ENCODE measurements at regions of chr10 and their contacts with region 1.

Region 1: DNA sequence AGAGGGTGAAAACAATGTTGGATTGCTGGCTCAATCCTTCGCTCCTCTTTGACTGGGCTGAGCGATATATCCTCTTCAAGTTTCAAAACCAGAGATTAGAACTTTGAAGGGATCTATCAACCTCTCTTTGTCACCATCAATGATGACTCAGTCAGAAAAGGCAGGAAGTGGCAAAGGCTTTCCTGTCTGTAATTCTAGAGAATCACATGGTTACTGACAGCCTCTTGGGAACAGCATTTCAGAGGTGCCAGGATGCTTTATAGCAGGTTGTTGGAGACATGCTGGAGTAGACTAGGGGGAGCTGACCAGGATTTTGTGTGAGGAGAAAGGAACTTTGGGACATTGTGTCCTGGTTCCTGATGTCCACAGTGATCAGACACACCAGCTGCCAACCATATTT is 81.3 kb downstream of the PRKCQ start:
- DNase-seq: peak in 7 of 9 experiments; percentile 42 to 89 (median 52)
- ATAC-seq: peak; percentile 72
- H3K4me3 ChIP-seq: no peak overlapping the region
- H3K4me3 Mint-ChIP-seq: peak overlapping the region; percentile 55
- H3K27ac ChIP-seq: peak overlapping the region; percentile 0 to 87
- H3K27ac Mint-ChIP-seq: peak overlapping the region; percentile 94
- H3K4me1 ChIP-seq: peaks cover 36% of the 10 kb centered on the region
- H3K4me1 Mint-ChIP-seq: peaks cover 31% of the 10 kb centered on the region
- H3K27me3 ChIP-seq: no peaks in the 10 kb centered on the region
- H3K27me3 Mint-ChIP-seq: no peaks in the 10 kb centered on the region
- CTCF ChIP-seq: no peak

Region 2: DNA sequence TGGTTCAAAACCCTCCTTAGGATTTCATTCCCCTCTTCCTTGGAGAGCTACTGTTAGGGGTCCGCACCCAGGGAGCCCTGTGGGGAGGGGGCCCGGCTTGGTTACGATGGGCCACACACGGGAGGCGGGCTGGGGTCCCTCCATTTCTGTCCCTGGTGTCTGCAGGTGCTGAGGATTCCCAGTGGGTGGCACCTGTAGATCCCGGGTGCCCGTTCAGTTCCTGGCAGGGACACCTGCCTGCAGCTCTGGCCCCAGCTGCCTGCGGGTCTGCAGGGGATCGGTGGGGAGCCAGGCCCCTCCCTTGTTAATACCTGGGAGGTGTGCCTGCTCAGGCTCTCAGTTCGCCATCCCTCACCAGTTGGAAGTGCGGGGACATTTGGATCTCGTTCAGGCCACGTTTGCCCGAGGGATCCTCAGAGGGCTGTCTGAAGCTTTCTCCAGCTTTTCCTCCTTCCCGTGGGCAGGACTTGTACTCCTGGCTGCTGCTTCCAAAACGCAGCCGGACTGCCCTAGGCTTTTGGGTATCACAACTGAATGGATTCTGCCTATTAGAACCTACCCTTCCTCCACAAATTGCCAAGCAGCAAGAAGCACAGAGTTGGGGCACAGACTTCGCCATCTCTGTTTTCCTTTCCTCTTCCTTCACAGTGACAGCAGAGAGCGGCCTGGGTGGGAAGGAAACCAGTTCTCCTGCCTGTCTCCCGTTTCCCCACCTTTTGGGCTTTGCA is 499.2 kb before region 1 on chr10:
- CTCF ChIA-PET with region 1: no interaction called
- POLR2A ChIA-PET with region 1: no interaction called
- intact Hi-C with region 1: no loop called
- DNase-seq: peak in 1 of 9 experiments; percentile 11
- ATAC-seq: no peak
- H3K4me3 ChIP-seq: no peak overlapping the region
- H3K4me3 Mint-ChIP-seq: no peak overlapping the region
- H3K27ac ChIP-seq: no peak overlapping the region
- H3K27ac Mint-ChIP-seq: no peak overlapping the region
- H3K4me1 ChIP-seq: no peaks in the 10 kb centered on the region
- H3K4me1 Mint-ChIP-seq: peaks cover 8% of the 10 kb centered on the region
- H3K27me3 ChIP-seq: no peaks in the 10 kb centered on the region
- H3K27me3 Mint-ChIP-seq: peaks cover 7% of the 10 kb centered on the region
- CTCF ChIP-seq: no peak

Region 3: GRCh38 chr10:6275022-6275997 is 223.5 kb before region 1 on chr10:
- CTCF ChIA-PET with region 1: no interaction called
- POLR2A ChIA-PET with region 1: no interaction called
- intact Hi-C with region 1: loop called in 1 of 2 experiments (anchors 10 kb)
- DNase-seq: peak; percentile 73 to 97 (median 84)
- ATAC-seq: peak; percentile 86
- H3K4me3 ChIP-seq: peak overlapping the region in 1 of 2 experiments; percentile 37
- H3K4me3 Mint-ChIP-seq: peak overlapping the region; percentile 61
- H3K27ac ChIP-seq: peak overlapping the region; percentile 39 to 86
- H3K27ac Mint-ChIP-seq: peak overlapping the region; percentile 92
- H3K4me1 ChIP-seq: peaks cover 31% of the 10 kb centered on the region
- H3K4me1 Mint-ChIP-seq: peaks cover 42% of the 10 kb centered on the region
- H3K27me3 ChIP-seq: no peaks in the 10 kb centered on the region
- H3K27me3 Mint-ChIP-seq: no peaks in the 10 kb centered on the region
- CTCF ChIP-seq: no peak

Region 4: GRCh38 chr10:6514844-6515780 is 16.3 kb after region 1 on chr10:
- CTCF ChIA-PET with region 1: interaction called, 5 read pairs
- POLR2A ChIA-PET with region 1: interaction called, 4 read pairs
- intact Hi-C with region 1: loop called in 1 of 2 experiments (anchors 2 kb)
- DNase-seq: no peak
- ATAC-seq: no peak
- H3K4me3 ChIP-seq: no peak overlapping the region
- H3K4me3 Mint-ChIP-seq: no peak overlapping the region
- H3K27ac ChIP-seq: peak overlapping the region in 1 of 2 experiments; percentile 33
- H3K27ac Mint-ChIP-seq: peak overlapping the region; percentile 65
- H3K4me1 ChIP-seq: peaks cover 43% of the 10 kb centered on the region
- H3K4me1 Mint-ChIP-seq: peaks cover 79% of the 10 kb centered on the region
- H3K27me3 ChIP-seq: no peaks in the 10 kb centered on the region
- H3K27me3 Mint-ChIP-seq: no peaks in the 10 kb centered on the region
- CTCF ChIP-seq: no peak

Region 5: DNA sequence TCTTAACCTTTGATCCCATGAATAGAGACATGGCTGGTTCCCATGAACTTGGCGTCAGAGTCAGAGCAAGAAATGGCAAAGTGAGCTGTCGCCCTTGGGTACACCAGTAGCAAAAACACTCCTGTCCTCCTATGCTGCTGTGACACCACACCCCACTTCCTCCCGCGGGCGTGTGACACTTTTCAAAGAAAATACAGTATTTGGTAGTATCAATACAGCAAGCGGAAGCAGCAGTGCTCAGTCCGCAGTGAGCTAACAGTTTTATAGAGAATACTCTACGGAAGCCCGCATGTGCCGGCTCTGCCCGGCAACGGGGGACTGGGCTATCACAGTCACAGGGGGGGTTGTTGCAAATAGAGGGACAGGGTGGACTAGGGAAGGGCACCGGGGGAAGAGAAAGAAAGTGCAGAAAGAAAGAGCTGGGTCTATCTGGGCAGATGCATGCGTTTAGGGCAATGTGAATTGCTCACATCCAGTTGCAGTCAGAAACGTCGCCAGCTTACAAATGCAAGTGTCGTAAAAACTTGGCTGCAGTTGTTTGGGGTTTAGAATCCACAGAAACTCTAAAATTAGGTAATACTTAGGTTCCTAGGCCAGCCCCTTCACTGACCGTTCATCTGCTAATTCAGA is 31.6 kb after region 1 on chr10:
- CTCF ChIA-PET with region 1: no interaction called
- POLR2A ChIA-PET with region 1: interaction called, 5 read pairs
- intact Hi-C with region 1: loop called in 1 of 2 experiments (anchors 1 kb)
- DNase-seq: peak; percentile 49 to 89 (median 77)
- ATAC-seq: peak; percentile 96
- H3K4me3 ChIP-seq: peak overlapping the region; percentile 38 to 42
- H3K4me3 Mint-ChIP-seq: peak overlapping the region; percentile 83
- H3K27ac ChIP-seq: peak overlapping the region; percentile 84 to 89
- H3K27ac Mint-ChIP-seq: peak overlapping the region; percentile 97
- H3K4me1 ChIP-seq: peaks cover 57% of the 10 kb centered on the region
- H3K4me1 Mint-ChIP-seq: peaks cover 85% of the 10 kb centered on the region
- H3K27me3 ChIP-seq: no peaks in the 10 kb centered on the region
- H3K27me3 Mint-ChIP-seq: no peaks in the 10 kb centered on the region
- CTCF ChIP-seq: no peak

Measured in CD8-positive, alpha-beta T cell (primary cell).